Aorta (tissue), 5 donors: ENCODE measurements at regions of chr4 and their contacts with region 1.

Region 1: GRCh38 chr4:118981839-118982381 is 93.3 kb downstream of the SYNPO2 start:
- DNase-seq: peak in 1 of 2 donors; percentile 75
- ATAC-seq: peak; percentile 90
- H3K4me3 ChIP-seq: no peak overlapping the region
- H3K27ac ChIP-seq: peak overlapping the region in 1 of 2 donors; percentile 68
- H3K4me1 ChIP-seq: peaks cover 18 to 22% of the 10 kb centered on the region in 2 donors
- H3K27me3 ChIP-seq: no peaks in the 10 kb centered on the region

Region 2: DNA sequence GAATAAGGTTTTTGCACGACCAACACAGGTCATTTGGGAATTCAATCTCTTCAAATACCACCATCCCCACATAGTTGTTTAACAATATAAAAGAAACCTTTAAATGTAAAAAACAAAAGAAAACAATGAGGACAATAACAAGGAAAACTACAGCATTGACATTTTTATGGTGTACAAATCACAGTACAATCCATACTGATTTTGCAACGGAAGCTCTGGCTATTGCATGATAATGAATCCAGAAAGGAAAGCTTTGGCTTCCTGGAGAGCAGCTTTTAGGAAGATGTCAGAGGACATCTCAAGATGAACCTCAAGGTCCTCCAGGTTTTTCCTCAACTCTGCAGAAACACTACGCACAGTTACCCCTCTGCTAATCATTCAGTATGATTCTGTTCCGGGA is 42.2 kb after region 1 on chr4:
- intact Hi-C with region 1: no loop called
- DNase-seq: no peak
- ATAC-seq: no peak
- H3K4me3 ChIP-seq: no peak overlapping the region
- H3K27ac ChIP-seq: peak overlapping the region in 1 of 2 donors; percentile 80
- H3K4me1 ChIP-seq: peaks cover 0 to 4% of the 10 kb centered on the region in 2 donors
- H3K27me3 ChIP-seq: no peaks in the 10 kb centered on the region

Region 3: DNA sequence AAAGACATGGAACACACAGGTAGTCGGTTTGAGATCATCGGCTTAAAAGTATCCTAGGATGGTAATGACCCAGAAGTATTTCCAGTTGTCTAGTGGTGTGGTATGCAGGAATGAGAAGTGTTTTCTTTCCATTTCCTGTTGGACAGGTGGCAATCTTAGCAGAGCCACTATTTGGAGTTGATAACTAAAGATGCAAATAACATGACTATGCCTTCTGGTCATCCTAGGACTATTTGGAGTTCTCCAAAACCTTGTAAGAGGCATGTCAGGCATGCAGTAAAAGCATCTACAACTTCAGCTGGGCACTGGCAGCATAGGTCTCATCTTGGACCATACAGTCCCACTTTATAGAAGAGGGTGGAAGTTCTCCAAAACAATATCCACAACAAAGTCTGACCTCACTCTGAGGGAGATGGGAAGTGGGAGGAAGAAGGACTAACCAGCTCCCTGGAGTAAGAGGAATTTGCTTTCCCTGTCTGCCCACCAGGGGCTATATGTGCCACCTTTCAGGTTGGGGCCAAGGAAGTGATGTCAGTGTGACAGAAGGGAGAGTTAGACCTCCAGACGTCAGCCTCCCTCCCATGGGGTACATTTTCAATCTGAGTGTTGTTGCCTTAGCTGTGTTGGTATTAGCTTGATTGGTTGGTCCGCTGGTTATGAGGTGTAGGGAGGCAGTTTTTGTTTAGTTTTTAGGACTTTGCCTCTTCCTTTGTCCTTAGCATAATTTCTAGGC is 52.5 kb after region 1 on chr4:
- intact Hi-C with region 1: loop called (anchors 5 kb)
- DNase-seq: no peak
- ATAC-seq: no peak
- H3K4me3 ChIP-seq: no peak overlapping the region
- H3K27ac ChIP-seq: peak overlapping the region; percentile 78 to 95
- H3K4me1 ChIP-seq: peaks cover 5 to 24% of the 10 kb centered on the region in 2 donors
- H3K27me3 ChIP-seq: no peaks in the 10 kb centered on the region

Region 4: DNA sequence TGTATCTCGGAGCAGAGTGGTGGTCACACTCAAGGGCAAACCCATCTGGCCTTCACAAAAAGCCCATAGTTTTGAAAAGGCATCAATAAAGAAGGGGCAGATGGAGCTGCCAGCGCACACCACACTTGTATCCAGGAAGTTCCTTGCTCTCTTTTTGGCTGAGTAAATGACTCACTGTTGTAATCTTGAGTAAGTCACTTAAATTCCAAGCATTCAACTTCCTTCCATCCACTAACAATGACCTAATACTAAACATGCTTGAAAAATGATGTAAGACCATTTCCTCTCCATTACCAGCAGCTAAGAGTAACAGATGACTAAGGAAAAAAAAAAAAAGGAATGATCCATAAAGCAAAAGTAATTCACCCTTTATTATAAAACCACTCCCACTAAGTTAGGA is 121.4 kb after region 1 on chr4:
- intact Hi-C with region 1: loop called (anchors 5 to 10 kb)
- DNase-seq: peak; percentile 75 to 83
- ATAC-seq: peak; percentile 84
- H3K4me3 ChIP-seq: no peak overlapping the region
- H3K27ac ChIP-seq: peak overlapping the region in 1 of 2 donors; percentile 75
- H3K4me1 ChIP-seq: peaks cover 5 to 8% of the 10 kb centered on the region in 2 donors
- H3K27me3 ChIP-seq: no peaks in the 10 kb centered on the region

Region 5: DNA sequence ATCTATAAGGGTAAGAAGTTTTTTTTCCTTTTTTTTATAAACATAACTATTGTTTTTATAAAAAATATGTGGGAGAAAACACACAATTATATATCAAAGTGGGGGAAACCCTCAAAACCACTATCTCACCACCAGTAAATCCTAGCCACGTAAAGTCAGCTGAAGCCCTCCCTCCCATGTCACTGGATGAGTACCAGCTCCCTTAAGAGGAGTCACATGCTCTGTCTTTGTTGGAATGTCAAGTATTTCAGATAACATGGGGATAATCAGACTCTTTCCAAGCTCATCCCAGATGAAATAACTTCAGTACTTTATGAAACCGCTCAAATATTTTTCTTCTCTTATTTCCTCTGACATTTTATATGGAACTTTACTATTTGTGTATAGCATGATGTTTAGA is 156.1 kb after region 1 on chr4:
- intact Hi-C with region 1: loop called in 1 of 2 experiments (anchors 10 kb)
- DNase-seq: no peak
- ATAC-seq: no peak
- H3K4me3 ChIP-seq: no peak overlapping the region
- H3K27ac ChIP-seq: no peak overlapping the region
- H3K4me1 ChIP-seq: peaks cover 3 to 10% of the 10 kb centered on the region in 2 donors
- H3K27me3 ChIP-seq: no peaks in the 10 kb centered on the region

Region 6: DNA sequence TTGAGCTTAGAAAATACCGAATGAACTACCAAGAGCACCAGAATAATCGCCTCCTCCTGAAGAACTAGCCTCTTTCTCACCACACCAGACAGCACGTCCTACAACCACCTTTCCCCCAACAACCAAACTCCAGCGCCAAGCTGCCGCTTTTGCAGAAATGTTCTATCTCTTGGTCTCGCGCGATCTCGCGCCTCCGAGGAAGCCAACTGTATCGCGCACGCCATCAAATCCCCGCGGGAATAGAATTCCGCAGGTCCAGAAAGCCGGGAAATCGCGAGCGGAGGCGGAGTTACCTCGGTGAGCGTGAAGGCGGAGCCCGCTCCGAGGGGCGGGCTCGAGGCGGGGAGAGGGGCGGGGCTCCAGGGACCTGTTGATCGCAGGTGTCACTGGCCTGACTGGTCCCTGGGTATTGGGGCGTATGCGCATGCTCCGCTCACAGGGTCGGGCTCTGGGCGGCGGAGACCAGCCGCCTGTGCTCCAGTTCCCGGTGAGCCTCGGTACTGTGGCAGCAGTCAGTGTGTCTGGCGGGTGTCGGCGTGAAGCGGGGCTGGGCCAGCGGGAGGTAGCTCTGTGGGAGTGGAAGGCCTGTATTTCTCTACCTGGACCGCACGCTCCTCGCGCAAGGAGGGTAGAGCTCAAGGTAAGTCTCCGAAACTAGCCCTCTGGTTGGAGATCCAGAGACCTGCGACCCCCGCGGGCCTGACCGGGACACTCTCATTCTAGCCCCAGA is 230.5 kb after region 1 on chr4 and contains the start of gene USP53:
- intact Hi-C with region 1: loop called (anchors 5 to 10 kb)
- DNase-seq: peak; percentile 98 to 99
- ATAC-seq: peak; percentile 98
- H3K4me3 ChIP-seq: peak within 1 kb of the TSS; percentile 80 to 93
- H3K27ac ChIP-seq: peak within 1 kb of the TSS; percentile 69 to 93
- H3K4me1 ChIP-seq: no peaks in the 10 kb centered on the region
- H3K27me3 ChIP-seq: no peaks in the 10 kb centered on the region
- total RNA-seq, gene USP53: 102 to 114 TPM

Region 7: GRCh38 chr4:119286377-119287002 is 304.6 kb after region 1 on chr4:
- intact Hi-C with region 1: loop called (anchors 1 to 2 kb)
- DNase-seq: no peak
- ATAC-seq: peak; percentile 79
- H3K4me3 ChIP-seq: no peak overlapping the region
- H3K27ac ChIP-seq: no peak overlapping the region
- H3K4me1 ChIP-seq: peaks cover 0 to 5% of the 10 kb centered on the region in 2 donors
- H3K27me3 ChIP-seq: no peaks in the 10 kb centered on the region